ENCODE measurements at regions of chr12 and their contacts with region 1.

Region 1: DNA sequence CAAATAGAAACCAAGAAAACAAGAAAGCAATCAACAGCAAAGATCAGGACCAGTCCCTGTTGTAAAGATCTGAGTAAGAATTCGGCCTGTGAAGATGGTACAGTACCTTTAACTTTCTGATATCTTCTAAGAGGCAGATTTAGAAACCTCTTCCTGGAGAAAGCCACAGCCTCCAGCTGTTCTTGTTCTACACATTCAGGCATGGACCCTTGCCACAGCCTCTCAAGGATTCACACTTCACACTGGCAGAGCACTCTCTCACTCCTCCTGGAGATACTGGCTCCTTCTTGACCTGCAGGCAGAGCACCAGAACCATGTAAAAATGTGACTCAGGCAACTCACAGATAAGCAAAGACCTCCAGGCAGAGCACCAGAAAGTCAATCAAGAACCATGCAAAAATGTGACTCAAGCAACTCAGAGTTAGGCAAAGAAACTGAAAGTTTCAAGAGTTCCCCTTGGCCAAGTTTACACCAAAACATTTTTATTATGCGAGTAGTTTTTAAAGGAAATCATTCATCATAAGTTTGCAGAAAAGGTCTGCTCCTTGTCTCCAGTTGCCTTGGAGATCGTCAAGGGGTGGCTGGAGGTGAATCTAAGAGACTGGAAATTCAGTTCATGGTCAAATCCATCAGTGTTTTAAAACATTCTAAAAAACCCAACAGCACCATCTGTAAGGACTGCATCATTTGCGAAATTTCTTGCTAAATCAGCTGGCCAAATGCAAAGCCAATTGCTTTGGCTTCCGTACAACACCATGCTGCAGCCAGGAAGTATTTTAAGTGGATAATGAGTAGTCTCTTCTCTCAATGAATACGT is 119.3 kb upstream of the MDM1 start:
- DNase-seq: peak; percentile 55
- H3K4me3 Mint-ChIP-seq: peak overlapping the region; percentile 43
- H3K27ac Mint-ChIP-seq: peak overlapping the region; percentile 95
- H3K4me1 Mint-ChIP-seq: peaks cover 78% of the 10 kb centered on the region
- H3K27me3 Mint-ChIP-seq: no peaks in the 10 kb centered on the region

Region 2: DNA sequence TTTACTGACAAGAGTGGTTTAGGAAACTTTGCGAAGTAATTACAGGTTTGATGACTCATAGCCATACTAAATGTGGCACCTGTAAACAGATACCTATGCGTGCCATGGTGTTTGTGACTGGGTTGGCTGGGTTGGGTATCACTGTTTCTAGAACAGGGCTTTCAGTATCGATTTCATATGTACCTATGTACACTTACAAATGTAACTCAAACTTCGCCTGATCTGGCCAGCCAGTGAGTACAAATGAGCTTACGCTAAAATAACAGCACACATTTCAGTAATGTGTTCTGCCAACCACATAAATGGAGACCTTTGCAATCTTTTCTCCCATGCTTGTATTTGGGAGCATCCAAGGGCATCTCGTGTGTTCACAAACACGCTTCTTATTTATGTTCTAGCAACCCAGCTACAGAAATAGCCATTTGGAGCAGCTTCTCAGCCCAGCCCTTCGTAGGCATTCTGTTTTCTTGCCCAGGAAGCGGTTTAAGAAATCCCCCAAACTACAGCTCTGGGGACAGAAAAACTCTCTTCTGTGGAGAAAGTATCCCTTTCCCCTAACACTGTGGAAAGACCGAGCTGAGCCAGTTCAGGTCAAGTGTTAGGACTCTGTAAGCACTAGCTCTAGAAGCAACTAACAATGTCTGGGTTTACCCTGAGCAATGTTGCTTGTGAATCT is 77.0 kb before region 1 on chr12:
- intact Hi-C with region 1: loop called (anchors 1 kb)
- DNase-seq: peak; percentile 57
- H3K4me3 Mint-ChIP-seq: no peak overlapping the region
- H3K27ac Mint-ChIP-seq: peak overlapping the region; percentile 91
- H3K4me1 Mint-ChIP-seq: peaks cover 30% of the 10 kb centered on the region
- H3K27me3 Mint-ChIP-seq: no peaks in the 10 kb centered on the region

Region 3: DNA sequence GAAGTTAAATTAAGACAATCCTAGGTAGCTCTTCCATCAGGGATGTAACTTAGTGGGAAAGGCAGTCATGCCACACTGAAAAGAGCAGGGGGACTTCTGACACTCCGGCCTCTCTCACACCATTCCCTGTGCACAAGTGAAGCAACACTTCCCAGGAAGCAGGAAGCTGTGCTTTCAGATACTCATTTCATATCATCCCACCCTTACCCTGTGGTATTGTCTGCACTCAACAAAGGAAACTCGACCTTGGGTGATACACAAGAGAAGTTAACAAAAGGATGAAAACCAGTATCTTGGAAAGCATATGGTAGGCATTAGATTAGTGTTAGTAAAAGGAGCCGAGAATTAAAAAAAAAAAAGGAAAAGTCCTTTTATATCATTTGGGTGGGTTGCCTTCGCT is 58.1 kb before region 1 on chr12:
- intact Hi-C with region 1: no loop called
- DNase-seq: no peak
- H3K4me3 Mint-ChIP-seq: no peak overlapping the region
- H3K27ac Mint-ChIP-seq: no peak overlapping the region
- H3K4me1 Mint-ChIP-seq: peaks cover 6% of the 10 kb centered on the region
- H3K27me3 Mint-ChIP-seq: no peaks in the 10 kb centered on the region

Region 4: DNA sequence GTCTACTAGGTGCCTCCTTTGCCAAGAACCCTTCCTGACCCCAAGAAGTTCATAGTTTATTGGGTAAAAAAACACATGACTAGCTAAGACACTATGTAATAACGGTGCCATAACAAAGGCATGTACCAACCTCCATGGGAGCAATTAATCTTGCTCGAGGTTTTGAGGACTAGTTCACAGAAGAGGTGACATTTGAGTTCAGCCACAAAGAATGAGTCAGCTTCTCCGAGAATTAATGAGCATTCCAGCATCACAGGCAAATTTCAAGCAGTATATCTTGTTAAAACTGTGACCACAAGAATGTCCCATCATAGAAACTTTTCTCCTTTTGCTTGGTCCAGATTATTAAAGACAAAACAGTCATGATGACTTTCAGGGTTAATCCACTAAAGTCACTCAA is 46.2 kb after region 1 on chr12:
- intact Hi-C with region 1: loop called (anchors 1 kb)
- DNase-seq: no peak
- H3K4me3 Mint-ChIP-seq: peak overlapping the region; percentile 51
- H3K27ac Mint-ChIP-seq: peak overlapping the region; percentile 86
- H3K4me1 Mint-ChIP-seq: peaks cover 33% of the 10 kb centered on the region
- H3K27me3 Mint-ChIP-seq: peaks cover 3% of the 10 kb centered on the region

Region 5: DNA sequence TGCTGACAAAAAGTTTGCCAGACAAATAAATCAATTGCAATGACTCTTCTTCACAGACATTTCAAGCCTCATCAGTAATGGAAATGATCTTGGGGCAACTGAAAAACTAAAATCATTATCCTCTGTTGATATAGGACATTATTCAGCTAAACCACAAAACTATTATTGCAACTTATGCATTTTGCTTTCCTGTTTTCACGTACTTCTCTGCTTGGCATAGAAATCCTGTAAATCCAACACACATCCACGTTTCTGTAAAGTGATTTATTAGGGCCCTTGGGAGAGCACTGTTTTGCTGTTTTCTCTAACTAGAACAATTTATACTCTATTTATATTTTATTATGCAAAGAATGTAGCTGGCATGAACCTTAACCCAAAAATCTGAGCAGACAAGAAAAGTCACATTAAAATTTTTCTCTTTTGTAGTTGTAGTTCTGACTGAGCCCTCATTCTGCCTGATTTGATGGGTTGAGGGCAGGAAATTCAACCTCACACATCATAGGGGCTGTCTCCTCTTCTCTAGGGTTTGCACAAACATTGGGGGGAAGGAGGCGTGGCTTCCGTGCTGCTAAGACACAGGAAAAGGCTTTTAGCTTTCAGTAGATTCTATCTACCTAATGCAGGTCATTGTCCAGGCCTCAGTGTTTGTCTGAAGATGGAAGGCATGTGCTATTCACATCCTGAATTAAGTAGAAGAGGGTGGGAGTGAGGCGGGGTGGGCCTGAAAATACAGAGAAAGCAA is 223.8 kb after region 1 on chr12:
- intact Hi-C with region 1: loop called (anchors 1 kb)
- DNase-seq: peak; percentile 59
- H3K4me3 Mint-ChIP-seq: peak overlapping the region; percentile 55
- H3K27ac Mint-ChIP-seq: peak overlapping the region; percentile 81
- H3K4me1 Mint-ChIP-seq: peaks cover 39% of the 10 kb centered on the region
- H3K27me3 Mint-ChIP-seq: no peaks in the 10 kb centered on the region

Region 6: DNA sequence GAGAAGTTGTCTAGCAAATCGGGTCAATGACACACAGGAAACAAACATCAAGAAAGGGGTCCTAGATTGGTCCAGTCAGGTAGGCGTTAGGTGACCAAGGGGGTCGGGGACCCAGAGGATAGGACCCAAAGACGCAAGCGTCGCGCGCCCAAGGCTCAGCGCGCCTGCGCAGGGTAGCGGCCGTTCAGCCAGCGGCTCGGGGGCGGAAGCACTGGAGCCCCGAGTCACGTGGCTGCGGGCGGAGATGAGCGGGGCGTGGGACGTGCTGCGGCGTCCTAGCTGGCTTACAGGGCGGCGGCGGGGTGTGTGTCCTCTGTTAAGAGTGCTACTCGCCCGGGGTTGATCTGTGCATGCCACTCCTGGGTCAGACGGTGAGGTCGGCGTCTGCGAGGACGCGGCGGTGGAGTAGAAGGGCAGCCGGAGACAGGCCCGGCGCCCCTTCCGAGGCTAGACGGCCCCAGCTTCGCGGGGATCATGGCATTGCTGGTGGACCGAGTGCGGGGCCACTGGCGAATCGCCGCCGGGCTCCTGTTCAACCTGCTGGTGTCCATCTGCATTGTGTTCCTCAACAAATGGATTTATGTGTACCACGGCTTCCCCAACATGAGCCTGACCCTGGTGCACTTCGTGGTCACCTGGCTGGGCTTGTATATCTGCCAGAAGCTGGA is 294.6 kb after region 1 on chr12 and contains the start of gene SLC35E3:
- intact Hi-C with region 1: loop called (anchors 1 kb)
- DNase-seq: peak; percentile 91
- H3K4me3 Mint-ChIP-seq: peak within 1 kb of the TSS; percentile 92
- H3K27ac Mint-ChIP-seq: peak within 1 kb of the TSS; percentile 88
- H3K4me1 Mint-ChIP-seq: peaks cover 35% of the 10 kb centered on the region
- H3K27me3 Mint-ChIP-seq: no peaks in the 10 kb centered on the region
- total RNA-seq, gene SLC35E3: 6.3 and 9.4 TPM in 2 replicates